B cell (primary cell): ENCODE measurements at regions of chr17 and their contacts with region 1.

Region 1: DNA sequence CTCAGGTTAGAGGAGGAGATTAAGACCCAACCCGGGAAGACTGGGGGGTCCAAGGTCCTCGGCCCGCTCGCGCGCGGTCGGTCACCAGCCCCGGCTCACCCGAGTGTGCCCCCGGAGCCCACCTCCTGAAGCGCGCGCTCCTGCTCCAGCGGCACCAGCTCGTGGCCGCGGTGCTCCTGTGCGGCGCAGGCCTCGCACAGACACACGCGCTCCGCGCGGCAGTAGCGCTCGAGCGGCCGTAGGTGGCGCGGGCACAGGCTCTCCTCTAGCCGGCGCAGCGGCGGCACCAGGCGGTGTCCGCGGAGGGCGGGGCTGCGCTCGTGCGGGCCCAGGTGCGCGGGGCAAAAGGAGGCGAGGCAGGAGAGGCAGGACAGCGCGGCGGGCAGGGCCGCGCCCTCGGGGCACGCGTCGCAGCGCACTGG is 618 bp downstream of the TRIM47 start:
- DNase-seq: peak; percentile 87
- ATAC-seq: peak; percentile 77
- H3K4me3 ChIP-seq: peak overlapping the region in 4 of 5 experiments; percentile 46 to 69 (median 52)
- H3K4me3 Mint-ChIP-seq: peak overlapping the region; percentile 90
- H3K27ac ChIP-seq: peak overlapping the region; percentile 44 to 55
- H3K27ac Mint-ChIP-seq: peak overlapping the region; percentile 91
- H3K4me1 ChIP-seq: peaks cover 30 to 39% of the 10 kb centered on the region in 2 donors
- H3K4me1 Mint-ChIP-seq: peaks cover 35% of the 10 kb centered on the region
- H3K27me3 ChIP-seq: peaks cover 0 to 7% (median 1%) of the 10 kb centered on the region in 4 experiments
- H3K27me3 Mint-ChIP-seq: peaks cover 4% of the 10 kb centered on the region
- CTCF ChIP-seq: peak; percentile 73

Region 2: GRCh38 chr17:75864448-75864871 is 13.3 kb before region 1 on chr17:
- CTCF ChIA-PET with region 1: interaction called, 26 read pairs
- POLR2A ChIA-PET with region 1: interaction called, 12 read pairs
- intact Hi-C with region 1: loop called (anchors 1 kb)
- DNase-seq: peak; percentile 88
- ATAC-seq: peak; percentile 88
- H3K4me3 ChIP-seq: no peak overlapping the region
- H3K4me3 Mint-ChIP-seq: peak overlapping the region; percentile 64
- H3K27ac ChIP-seq: peak overlapping the region; percentile 78 to 82
- H3K27ac Mint-ChIP-seq: peak overlapping the region; percentile 93
- H3K4me1 ChIP-seq: peaks cover 15 to 23% of the 10 kb centered on the region in 2 donors
- H3K4me1 Mint-ChIP-seq: peaks cover 23% of the 10 kb centered on the region
- H3K27me3 ChIP-seq: no peaks in the 10 kb centered on the region
- H3K27me3 Mint-ChIP-seq: no peaks in the 10 kb centered on the region
- CTCF ChIP-seq: no peak